K562 (cell line): ENCODE measurements at regions of chr2 and their contacts with region 1.

Region 1: GRCh38 chr2:166361351-166362153 is 14.2 kb downstream of the SCN9A start:
- DNase-seq: peak in 2 of 4 experiments; percentile 23 to 65
- ATAC-seq: peak; percentile 67
- H3K4me3 ChIP-seq: no peak overlapping the region
- H3K27ac ChIP-seq: peak overlapping the region; percentile 34; the same call in 2 of the 3 replicates
- H3K4me1 ChIP-seq: peaks cover 9 to 60% of the 10 kb centered on the region in 2 experiments
- H3K27me3 ChIP-seq: no peaks in the 10 kb centered on the region
- CTCF ChIP-seq: peak; percentile 55 to 82 (median 69); a peak in 5 of 6 replicates
- EP300 ChIP-seq: no peak
- POLR2A ChIP-seq: no peak
- RAD21 ChIP-seq: peak; percentile 70 to 87

Region 2: GRCh38 chr2:166057370-166058164 is 304.0 kb before region 1 on chr2:
- CTCF ChIA-PET with region 1: no interaction called
- POLR2A ChIA-PET with region 1: no interaction called
- in situ Hi-C with region 1: no loop called
- intact Hi-C with region 1: no loop called
- DNase-seq: peak; percentile 12 to 42 (median 16)
- ATAC-seq: no peak
- H3K4me3 ChIP-seq: no peak overlapping the region
- H3K27ac ChIP-seq: no peak overlapping the region
- H3K4me1 ChIP-seq: no peaks in the 10 kb centered on the region
- H3K27me3 ChIP-seq: no peaks in the 10 kb centered on the region
- CTCF ChIP-seq: peak in 2 of 3 experiments; percentile 39 to 71; a peak in 3 of 6 replicates
- EP300 ChIP-seq: no peak
- POLR2A ChIP-seq: no peak
- RAD21 ChIP-seq: peak; percentile 56 to 67

Region 3: DNA sequence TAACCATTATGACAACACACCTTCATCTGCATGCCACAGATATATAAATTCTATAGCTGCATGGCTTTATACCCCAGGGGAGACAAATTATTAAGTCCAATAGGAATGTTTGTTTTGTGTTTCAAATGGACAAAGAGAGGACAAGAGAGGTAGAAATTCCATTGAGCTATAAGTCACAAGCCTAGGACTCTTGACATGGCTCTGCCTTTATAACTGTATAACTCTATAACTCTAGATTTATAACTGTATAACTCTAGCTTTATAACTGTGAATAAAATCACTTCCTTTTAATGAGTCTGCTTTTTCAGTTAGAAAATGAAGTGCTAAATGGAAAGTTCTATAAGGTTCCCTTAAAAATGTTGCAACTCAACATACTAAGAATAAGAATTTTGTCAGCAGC is 92.2 kb before region 1 on chr2:
- CTCF ChIA-PET with region 1: no interaction called
- POLR2A ChIA-PET with region 1: no interaction called
- in situ Hi-C with region 1: no loop called
- intact Hi-C with region 1: no loop called
- DNase-seq: no peak
- ATAC-seq: no peak
- H3K4me3 ChIP-seq: no peak overlapping the region
- H3K27ac ChIP-seq: no peak overlapping the region
- H3K4me1 ChIP-seq: no peaks in the 10 kb centered on the region
- H3K27me3 ChIP-seq: no peaks in the 10 kb centered on the region
- CTCF ChIP-seq: no peak
- EP300 ChIP-seq: no peak
- POLR2A ChIP-seq: no peak
- RAD21 ChIP-seq: no peak

Region 4: GRCh38 chr2:166344286-166345113 is 17.1 kb before region 1 on chr2:
- CTCF ChIA-PET with region 1: no interaction called
- POLR2A ChIA-PET with region 1: interaction called, 12 read pairs
- in situ Hi-C with region 1: no loop called
- intact Hi-C with region 1: no loop called
- DNase-seq: peak in 1 of 4 experiments; percentile 40
- ATAC-seq: peak; percentile 48
- H3K4me3 ChIP-seq: no peak overlapping the region
- H3K27ac ChIP-seq: peak overlapping the region; percentile 24; the same call in 1 of the 3 replicates
- H3K4me1 ChIP-seq: peaks cover 0 to 5% of the 10 kb centered on the region in 2 experiments; a peak in 2 of 5 replicates
- H3K27me3 ChIP-seq: no peaks in the 10 kb centered on the region
- CTCF ChIP-seq: no peak
- EP300 ChIP-seq: no peak
- POLR2A ChIP-seq: no peak
- RAD21 ChIP-seq: no peak

Region 5: GRCh38 chr2:166375736-166376487 is 14.4 kb after region 1 on chr2 and contains the start of gene SCN9A:
- CTCF ChIA-PET with region 1: no interaction called
- POLR2A ChIA-PET with region 1: interaction called, 11 read pairs
- in situ Hi-C with region 1: no loop called
- intact Hi-C with region 1: loop called (anchors 1 kb)
- DNase-seq: peak; percentile 90 to 98 (median 93)
- ATAC-seq: peak; percentile 92
- H3K4me3 ChIP-seq: peak within 1 kb of the TSS; percentile 62
- H3K27ac ChIP-seq: peak within 1 kb of the TSS; percentile 83
- H3K4me1 ChIP-seq: peaks cover 4 to 27% of the 10 kb centered on the region in 2 experiments; a peak in 4 of 5 replicates
- H3K27me3 ChIP-seq: no peaks in the 10 kb centered on the region
- CTCF ChIP-seq: peak; percentile 36 to 40 (median 36); a peak in 5 of 6 replicates
- EP300 ChIP-seq: peak; percentile 92
- POLR2A ChIP-seq: peak; percentile 78
- RAD21 ChIP-seq: peak in 1 of 2 experiments; percentile 31; a peak in 2 of 4 replicates
- polyA plus RNA-seq, gene SCN9A: 1.4 to 1.5 TPM

Region 6: DNA sequence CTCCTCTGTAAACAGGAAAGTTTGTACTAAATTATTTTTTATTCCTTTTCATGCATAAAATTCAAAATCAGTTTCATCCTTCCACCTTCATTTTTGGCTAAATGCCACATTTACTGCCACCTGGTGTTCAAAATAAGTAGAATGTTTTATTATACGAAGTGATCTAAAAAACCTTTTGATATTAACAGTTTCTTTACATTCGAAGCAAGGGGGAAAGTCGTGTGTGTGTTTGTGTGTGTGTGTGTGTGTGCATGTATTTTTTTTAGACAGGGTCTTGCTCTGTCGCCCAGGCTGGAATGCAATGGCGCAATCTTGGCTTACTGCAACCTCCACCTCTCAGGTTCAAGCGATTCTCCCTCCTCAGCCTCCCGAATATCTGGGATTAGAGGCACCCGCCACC is 23.2 kb after region 1 on chr2:
- CTCF ChIA-PET with region 1: no interaction called
- POLR2A ChIA-PET with region 1: interaction called, 3 read pairs
- in situ Hi-C with region 1: no loop called
- intact Hi-C with region 1: loop called (anchors 1 kb)
- DNase-seq: peak in 3 of 4 experiments; percentile 31 to 57 (median 33)
- ATAC-seq: no peak
- H3K4me3 ChIP-seq: no peak overlapping the region
- H3K27ac ChIP-seq: no peak overlapping the region
- H3K4me1 ChIP-seq: peaks cover 0 to 11% of the 10 kb centered on the region in 2 experiments; a peak in 2 of 5 replicates
- H3K27me3 ChIP-seq: no peaks in the 10 kb centered on the region
- CTCF ChIP-seq: peak; percentile 38 to 61 (median 44); a peak in 5 of 6 replicates
- EP300 ChIP-seq: no peak
- POLR2A ChIP-seq: no peak
- RAD21 ChIP-seq: peak; percentile 42 to 70